Activated B cell treated with CpG ODN at 0.5 μM for 24 hours (primary cell): ENCODE measurements at regions of chr18 and their contacts with region 1.

Region 1: DNA sequence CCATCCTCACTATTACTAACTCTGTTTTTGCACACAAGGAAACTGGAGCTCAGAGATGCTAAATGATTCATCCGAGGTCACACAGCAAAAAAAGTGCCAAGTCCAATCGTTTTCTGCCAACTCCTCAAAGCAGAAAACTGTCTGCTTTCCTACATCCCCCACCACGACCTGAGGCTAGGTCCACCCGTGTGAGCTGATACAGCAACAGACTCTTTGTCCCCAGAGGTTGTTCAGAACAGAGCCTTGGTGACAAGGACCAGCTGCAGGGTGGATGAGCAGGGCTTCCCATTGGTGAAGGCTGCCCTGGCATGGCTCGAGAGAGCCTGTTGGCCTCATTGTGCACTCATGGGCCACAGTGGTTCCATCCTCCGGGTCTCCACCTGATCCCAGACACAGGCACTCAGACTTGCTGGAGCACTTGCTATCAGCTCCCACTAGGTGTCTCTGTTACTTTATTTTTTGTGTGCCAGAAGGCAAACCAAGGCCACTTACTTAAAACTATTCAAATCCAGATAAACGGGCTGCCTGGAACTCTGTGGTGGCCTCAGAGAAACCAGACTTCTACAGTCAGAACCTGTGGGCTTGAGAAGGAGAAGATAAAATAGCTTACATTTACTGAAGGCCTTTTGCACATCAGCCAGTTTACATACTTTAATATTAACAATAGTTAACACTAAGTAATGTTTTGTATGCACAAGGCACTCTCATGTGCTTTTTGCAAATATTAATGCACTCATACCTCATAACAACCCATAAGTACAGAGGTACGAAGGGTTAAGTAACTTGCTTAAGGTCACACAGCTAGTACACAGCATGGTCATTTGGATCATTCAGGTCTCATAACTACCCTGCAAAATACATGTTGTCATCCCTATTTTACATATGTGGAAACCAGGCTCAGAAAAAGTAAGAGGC is 62.9 kb upstream of the CTIF start:
- DNase-seq: no peak
- ATAC-seq: peak; percentile 37
- H3K4me3 Mint-ChIP-seq: no peak overlapping the region
- H3K27ac Mint-ChIP-seq: no peak overlapping the region
- H3K4me1 Mint-ChIP-seq: no peaks in the 10 kb centered on the region
- H3K27me3 Mint-ChIP-seq: peaks cover 23% of the 10 kb centered on the region
- CTCF ChIP-seq: peak; percentile 30

Region 2: DNA sequence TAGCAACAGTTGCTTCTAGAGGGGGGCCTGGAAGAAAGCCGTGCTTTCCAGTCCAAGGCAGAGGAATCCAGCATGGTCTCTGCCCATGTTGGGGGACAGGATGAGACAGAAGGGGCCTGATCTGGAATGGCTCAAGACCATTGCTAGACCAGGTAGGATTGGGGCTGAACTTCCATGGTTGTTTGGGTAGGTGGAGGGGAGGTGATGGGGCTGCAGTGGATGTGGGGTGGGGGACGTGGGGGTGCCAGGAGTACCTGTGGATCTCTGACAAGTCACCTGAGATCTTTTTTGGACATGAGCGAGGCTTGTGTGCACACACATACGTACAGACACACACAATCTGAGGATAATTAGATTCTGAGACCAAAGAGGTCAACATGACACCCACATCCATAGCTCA is 995.7 kb before region 1 on chr18:
- CTCF ChIA-PET with region 1: no interaction called
- POLR2A ChIA-PET with region 1: no interaction called
- intact Hi-C with region 1: no loop called
- DNase-seq: no peak
- ATAC-seq: no peak
- H3K4me3 Mint-ChIP-seq: no peak overlapping the region
- H3K27ac Mint-ChIP-seq: no peak overlapping the region
- H3K4me1 Mint-ChIP-seq: no peaks in the 10 kb centered on the region
- H3K27me3 Mint-ChIP-seq: peaks cover 13% of the 10 kb centered on the region
- CTCF ChIP-seq: no peak

Region 3: DNA sequence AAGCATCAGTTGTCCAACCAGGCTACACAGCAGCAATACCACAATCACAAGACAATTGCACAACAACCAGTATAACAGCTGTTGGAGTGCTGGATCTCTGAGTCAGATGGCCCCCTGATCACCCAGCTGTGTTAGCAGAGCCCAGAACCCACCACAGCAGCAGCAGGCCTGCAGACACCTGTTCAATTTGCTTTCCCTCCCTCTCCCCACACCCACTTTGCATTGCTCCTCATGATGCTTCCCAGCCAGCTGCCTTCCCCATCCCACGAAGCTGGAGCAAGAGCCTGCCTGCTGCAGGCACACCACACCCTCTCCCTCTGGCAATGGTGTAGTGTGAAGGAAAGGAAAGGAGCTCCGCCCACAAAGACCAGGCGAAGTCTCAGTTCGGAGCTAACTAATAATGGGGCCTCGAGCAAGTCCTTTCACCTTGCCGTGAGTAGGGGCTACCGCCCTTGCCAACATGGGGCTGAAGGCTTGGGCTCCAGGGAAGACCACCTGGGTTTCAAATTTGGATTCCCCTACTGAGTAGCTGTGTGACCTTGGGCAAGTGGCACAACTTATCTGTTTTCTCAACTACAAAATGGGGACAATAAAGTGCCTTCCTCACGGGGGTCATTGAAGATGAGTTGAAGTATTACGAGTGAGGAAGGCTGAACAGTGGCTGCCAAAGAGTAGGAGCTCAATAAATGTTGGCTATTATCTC is 47.3 kb before region 1 on chr18:
- CTCF ChIA-PET with region 1: no interaction called
- POLR2A ChIA-PET with region 1: no interaction called
- intact Hi-C with region 1: no loop called
- DNase-seq: no peak
- ATAC-seq: no peak
- H3K4me3 Mint-ChIP-seq: no peak overlapping the region
- H3K27ac Mint-ChIP-seq: no peak overlapping the region
- H3K4me1 Mint-ChIP-seq: no peaks in the 10 kb centered on the region
- H3K27me3 Mint-ChIP-seq: peaks cover 41% of the 10 kb centered on the region
- CTCF ChIP-seq: no peak

Region 4: GRCh38 chr18:48529796-48530195 is 53.9 kb after region 1 on chr18:
- CTCF ChIA-PET with region 1: no interaction called
- POLR2A ChIA-PET with region 1: no interaction called
- intact Hi-C with region 1: no loop called
- DNase-seq: no peak
- ATAC-seq: no peak
- H3K4me3 Mint-ChIP-seq: no peak overlapping the region
- H3K27ac Mint-ChIP-seq: no peak overlapping the region
- H3K4me1 Mint-ChIP-seq: no peaks in the 10 kb centered on the region
- H3K27me3 Mint-ChIP-seq: peaks cover 25% of the 10 kb centered on the region
- CTCF ChIP-seq: no peak

Region 5: DNA sequence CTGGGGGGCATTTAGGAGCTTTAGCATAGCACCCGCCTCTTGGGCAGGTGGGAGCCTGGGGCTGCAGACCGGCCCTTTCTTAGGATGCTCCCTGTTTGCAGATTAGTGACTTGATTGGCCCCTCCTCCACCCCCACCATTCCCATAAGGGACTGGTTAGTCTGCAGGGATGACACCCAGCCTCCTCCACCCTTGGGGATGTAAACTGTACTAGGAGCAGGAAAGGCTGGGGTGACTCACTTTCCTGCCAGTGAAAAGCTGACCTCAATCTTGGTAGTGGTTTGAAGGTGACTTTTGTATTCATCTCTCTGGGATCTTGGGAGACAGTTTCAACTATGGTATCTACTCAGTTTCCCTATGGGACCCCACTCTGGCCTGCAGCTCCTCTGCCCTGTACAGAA is 87.2 kb after region 1 on chr18:
- CTCF ChIA-PET with region 1: no interaction called
- POLR2A ChIA-PET with region 1: no interaction called
- intact Hi-C with region 1: no loop called
- DNase-seq: no peak
- ATAC-seq: no peak
- H3K4me3 Mint-ChIP-seq: no peak overlapping the region
- H3K27ac Mint-ChIP-seq: no peak overlapping the region
- H3K4me1 Mint-ChIP-seq: no peaks in the 10 kb centered on the region
- H3K27me3 Mint-ChIP-seq: no peaks in the 10 kb centered on the region
- CTCF ChIP-seq: no peak

Region 6: GRCh38 chr18:49447810-49448745 is 972.2 kb after region 1 on chr18:
- CTCF ChIA-PET with region 1: interaction called, 3 read pairs
- POLR2A ChIA-PET with region 1: no interaction called
- intact Hi-C with region 1: loop called (anchors 5 kb)
- DNase-seq: no peak
- ATAC-seq: no peak
- H3K4me3 Mint-ChIP-seq: no peak overlapping the region
- H3K27ac Mint-ChIP-seq: no peak overlapping the region
- H3K4me1 Mint-ChIP-seq: peaks cover 6% of the 10 kb centered on the region
- H3K27me3 Mint-ChIP-seq: no peaks in the 10 kb centered on the region
- CTCF ChIP-seq: no peak